ENCODE measurements at regions of chr6 and their contacts with region 1.

Region 1: GRCh38 chr6:44151348-44152108 is 7.1 kb upstream of the CAPN11 start:
- DNase-seq: peak; percentile 63
- H3K4me3 ChIP-seq: no peak overlapping the region
- H3K27ac ChIP-seq: no peak overlapping the region
- H3K4me1 ChIP-seq: no peaks in the 10 kb centered on the region
- H3K27me3 ChIP-seq: no peaks in the 10 kb centered on the region
- CTCF ChIP-seq: peak; percentile 99
- POLR2A ChIP-seq: no peak

Region 2: DNA sequence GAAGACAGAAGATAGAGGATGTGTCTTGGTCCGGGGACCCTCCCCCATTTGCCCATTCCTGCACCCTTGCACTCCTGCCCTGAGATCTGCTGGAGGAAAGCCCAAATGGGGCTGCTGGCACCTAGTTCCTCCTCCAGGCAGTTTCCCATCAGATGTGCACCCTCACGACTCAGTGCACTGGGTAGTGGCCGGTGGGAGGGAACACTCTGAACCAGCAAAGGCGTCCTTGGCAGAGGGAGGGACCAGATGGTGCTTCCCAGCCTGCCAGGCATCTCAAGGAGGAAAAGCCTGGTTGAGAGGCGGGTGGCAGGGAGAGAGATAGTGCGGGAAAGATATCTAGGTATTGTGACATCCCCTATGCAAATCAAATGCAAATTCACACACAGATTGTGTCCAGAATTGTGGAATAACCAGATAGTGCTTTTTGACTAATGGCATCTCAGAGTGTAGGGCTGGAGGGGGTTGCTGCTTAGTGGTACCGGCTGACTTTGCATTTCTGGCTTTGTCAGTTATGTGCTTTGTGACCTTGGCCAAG is 138.3 kb after region 1 on chr6:
- CTCF ChIA-PET with region 1: no interaction called
- POLR2A ChIA-PET with region 1: no interaction called
- dilution Hi-C with region 1: no loop called
- intact Hi-C with region 1: no loop called
- DNase-seq: no peak
- H3K4me3 ChIP-seq: no peak overlapping the region
- H3K27ac ChIP-seq: no peak overlapping the region
- H3K4me1 ChIP-seq: no peaks in the 10 kb centered on the region
- H3K27me3 ChIP-seq: peaks cover 10 to 14% of the 10 kb centered on the region in 2 experiments
- CTCF ChIP-seq: no peak
- POLR2A ChIP-seq: no peak

Region 3: GRCh38 chr6:44338228-44339122 is 186.9 kb after region 1 on chr6:
- CTCF ChIA-PET with region 1: interaction called, 5 read pairs
- POLR2A ChIA-PET with region 1: no interaction called
- dilution Hi-C with region 1: no loop called
- intact Hi-C with region 1: loop called (anchors 5 kb)
- DNase-seq: peak; percentile 63
- H3K4me3 ChIP-seq: no peak overlapping the region
- H3K27ac ChIP-seq: no peak overlapping the region
- H3K4me1 ChIP-seq: no peaks in the 10 kb centered on the region
- H3K27me3 ChIP-seq: peaks cover 28 to 44% of the 10 kb centered on the region in 2 experiments
- CTCF ChIP-seq: peak; percentile 57 to 72
- POLR2A ChIP-seq: no peak